ENCODE measurements at regions of chr3 and their contacts with region 1.

Region 1: GRCh38 chr3:188185717-188186251 is 31.8 kb downstream of the LPP start:
- DNase-seq: no peak
- H3K4me3 Mint-ChIP-seq: no peak overlapping the region
- H3K27ac Mint-ChIP-seq: no peak overlapping the region
- H3K4me1 Mint-ChIP-seq: peaks cover 35% of the 10 kb centered on the region
- H3K27me3 Mint-ChIP-seq: no peaks in the 10 kb centered on the region

Region 2: DNA sequence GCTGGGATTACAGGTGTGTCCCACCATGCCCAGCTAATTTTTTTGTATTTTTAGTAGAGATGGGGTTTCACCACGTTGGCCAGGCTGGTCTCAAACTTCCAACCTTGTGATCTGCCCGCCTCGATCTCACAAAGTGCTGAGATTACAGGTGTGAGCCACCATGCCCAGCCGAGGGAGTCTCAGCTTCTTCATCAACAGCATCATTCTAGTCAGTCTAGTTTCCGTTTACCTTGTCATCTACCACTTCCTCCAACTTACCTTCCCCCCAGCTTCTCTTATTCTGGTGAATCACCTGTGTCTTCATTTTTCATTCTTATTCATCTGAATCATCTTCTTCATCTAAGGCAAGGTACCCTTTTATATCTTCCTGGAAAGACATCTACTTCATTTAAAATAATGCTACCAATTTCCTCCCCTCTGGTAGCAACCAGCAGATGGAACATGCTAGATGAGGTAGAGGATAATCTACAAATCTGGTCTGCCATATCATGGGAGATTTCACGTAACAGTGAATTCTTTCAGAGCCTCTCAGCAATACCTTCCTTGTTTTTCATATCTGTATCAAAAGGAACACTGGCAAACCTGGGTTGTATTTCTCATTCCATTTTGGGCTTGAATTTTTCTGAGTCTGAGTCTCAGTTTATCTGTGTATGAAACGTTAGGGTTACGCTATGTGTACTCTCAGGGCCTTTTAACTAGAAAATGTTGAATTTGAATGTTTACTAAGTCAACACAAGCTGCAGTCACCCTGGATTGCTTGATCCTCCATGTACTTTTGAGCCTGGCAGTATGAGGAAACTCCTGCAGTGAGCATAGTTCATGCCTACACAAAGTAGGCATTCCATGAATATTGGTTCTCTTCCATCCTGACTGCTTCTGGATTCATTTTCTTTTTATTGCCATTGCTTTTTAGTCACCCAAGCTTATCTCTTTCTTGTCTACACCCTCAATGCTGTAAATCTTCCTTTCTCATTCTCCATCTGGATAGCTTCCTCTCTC is 15.0 kb before region 1 on chr3:
- intact Hi-C with region 1: loop called (anchors 2 kb)
- DNase-seq: no peak
- H3K4me3 Mint-ChIP-seq: no peak overlapping the region
- H3K27ac Mint-ChIP-seq: peak overlapping the region; percentile 56
- H3K4me1 Mint-ChIP-seq: peaks cover 38% of the 10 kb centered on the region
- H3K27me3 Mint-ChIP-seq: no peaks in the 10 kb centered on the region

Measured in activated T-helper 2 cell treated with anti-CD3 and anti-CD28 coated beads, Interferon-gamma antibody, Interleukin-2, Interleukin-4, amounts not matched to agents 10 μg/mL and 5 μg/mL and 100 μg/mL, durations not matched to agents 14 hours and 24 hours and 36 hours (primary cell).